Activated T-helper 2 cell treated with anti-CD3 and anti-CD28 coated beads, Interferon-gamma antibody, Interleukin-2, Interleukin-4, amounts not matched to agents 10 μg/mL and 5 μg/mL and 100 μg/mL, durations not matched to agents 14 hours and 24 hours and 36 hours (primary cell): ENCODE measurements at regions of chr2 and their contacts with region 1.

Region 1: DNA sequence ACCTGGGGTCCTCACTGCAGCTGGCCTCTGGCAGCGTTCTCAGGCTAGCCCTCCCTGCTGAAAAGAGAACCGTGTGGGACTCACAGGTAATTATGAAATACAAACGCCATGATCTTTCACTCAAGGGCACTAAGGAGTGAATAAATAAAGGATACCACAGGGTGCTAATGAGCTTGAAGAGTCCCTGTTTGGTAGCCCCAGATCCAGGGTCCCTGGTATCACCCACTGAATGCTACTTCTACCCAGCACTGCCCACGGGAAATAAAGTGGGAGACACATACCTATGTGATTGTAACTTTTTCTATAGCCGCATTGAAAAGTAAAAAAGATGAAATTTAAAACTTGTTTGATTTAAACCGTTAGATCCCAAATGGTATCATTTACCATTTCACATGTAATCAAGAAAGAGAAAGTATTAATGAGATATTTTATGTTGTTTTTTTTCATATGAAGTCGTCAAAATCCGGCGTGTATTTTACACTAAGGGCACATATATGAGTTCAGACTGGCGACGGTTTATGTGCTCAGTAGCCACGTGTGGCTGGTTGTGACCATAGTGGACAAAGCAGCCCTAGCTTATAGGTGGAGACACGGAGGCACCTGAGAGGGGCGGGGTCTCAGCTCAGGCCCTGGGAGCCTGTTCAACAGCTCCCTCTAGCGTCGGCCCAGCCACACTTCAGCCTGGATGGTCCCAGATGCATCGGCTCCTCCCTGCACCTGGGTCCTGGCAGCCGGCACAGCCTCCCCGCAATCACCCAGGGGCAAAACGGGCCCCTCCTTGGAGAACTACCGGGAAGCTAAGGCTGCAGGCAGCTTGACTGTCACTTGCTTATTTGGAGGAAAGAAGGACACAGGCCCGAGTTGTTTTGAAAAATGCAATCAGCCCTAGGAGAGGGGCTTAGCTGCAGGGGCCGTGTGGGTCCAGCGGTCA is 39.2 kb downstream of the ODC1 start:
- DNase-seq: peak; percentile 79
- H3K4me3 Mint-ChIP-seq: peak overlapping the region; percentile 76
- H3K27ac Mint-ChIP-seq: peak overlapping the region; percentile 95
- H3K4me1 Mint-ChIP-seq: peaks cover 49% of the 10 kb centered on the region
- H3K27me3 Mint-ChIP-seq: no peaks in the 10 kb centered on the region

Region 2: DNA sequence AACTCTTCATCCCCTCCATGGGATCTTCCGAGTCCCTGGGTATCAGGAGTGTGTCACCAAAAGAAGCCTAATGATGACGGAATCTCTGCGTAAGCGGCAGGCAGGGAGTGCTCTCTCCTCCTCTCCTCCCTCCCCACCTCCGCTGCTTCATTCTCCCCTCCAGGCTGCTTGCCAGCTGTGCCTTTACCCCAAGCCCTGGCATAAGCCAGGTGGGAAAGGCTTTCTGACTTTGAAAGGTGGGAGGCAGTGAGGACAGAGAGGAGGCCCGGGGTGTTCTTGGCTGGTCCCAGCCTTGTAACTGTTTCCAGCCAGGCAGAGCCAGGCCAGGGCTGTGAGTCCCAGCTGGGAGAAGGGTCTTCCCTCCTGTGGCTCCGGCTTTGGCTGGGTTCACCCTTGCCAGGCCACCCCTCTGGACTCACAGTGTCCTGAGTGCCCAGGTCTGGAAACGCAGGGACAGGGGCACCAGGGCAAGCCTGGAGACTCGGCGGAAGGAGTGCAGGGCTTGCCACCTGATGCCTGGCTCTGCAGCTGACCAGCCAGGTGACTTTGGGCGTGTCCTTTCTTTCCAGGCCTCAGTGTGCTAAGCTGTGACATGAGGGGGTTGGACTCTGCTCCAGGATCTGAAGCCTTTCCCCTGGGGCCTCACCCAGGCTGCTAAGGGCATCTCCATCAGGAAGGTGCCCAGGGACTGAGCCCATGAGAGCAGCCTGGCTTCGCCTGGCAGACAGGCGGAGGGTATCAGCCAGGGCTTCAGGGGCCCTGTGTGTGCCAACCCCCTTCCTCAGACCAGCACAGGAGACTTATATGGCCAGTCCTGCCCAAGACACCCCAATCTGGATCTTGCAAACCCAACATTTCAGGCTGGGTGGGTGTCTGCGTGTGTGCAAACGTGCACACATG is 139.0 kb before region 1 on chr2:
- intact Hi-C with region 1: loop called (anchors 1 kb)
- DNase-seq: no peak
- H3K4me3 Mint-ChIP-seq: no peak overlapping the region
- H3K27ac Mint-ChIP-seq: no peak overlapping the region
- H3K4me1 Mint-ChIP-seq: peaks cover 4% of the 10 kb centered on the region
- H3K27me3 Mint-ChIP-seq: peaks cover 2% of the 10 kb centered on the region

Region 3: GRCh38 chr2:10302479-10303180 is 106.3 kb before region 1 on chr2 and contains the start of gene HPCAL1:
- intact Hi-C with region 1: loop called (anchors 1 kb)
- DNase-seq: peak; percentile 80
- H3K4me3 Mint-ChIP-seq: peak within 1 kb of the TSS; percentile 98
- H3K27ac Mint-ChIP-seq: peak within 1 kb of the TSS; percentile 89
- H3K4me1 Mint-ChIP-seq: peaks cover 69% of the 10 kb centered on the region
- H3K27me3 Mint-ChIP-seq: no peaks in the 10 kb centered on the region
- total RNA-seq, gene HPCAL1: 102 and 110 TPM in 2 replicates

Region 4: GRCh38 chr2:10331027-10331701 is 77.8 kb before region 1 on chr2:
- intact Hi-C with region 1: loop called (anchors 1 kb)
- DNase-seq: peak; percentile 64
- H3K4me3 Mint-ChIP-seq: peak overlapping the region; percentile 95
- H3K27ac Mint-ChIP-seq: peak overlapping the region; percentile 92
- H3K4me1 Mint-ChIP-seq: peaks cover 64% of the 10 kb centered on the region
- H3K27me3 Mint-ChIP-seq: no peaks in the 10 kb centered on the region

Region 5: DNA sequence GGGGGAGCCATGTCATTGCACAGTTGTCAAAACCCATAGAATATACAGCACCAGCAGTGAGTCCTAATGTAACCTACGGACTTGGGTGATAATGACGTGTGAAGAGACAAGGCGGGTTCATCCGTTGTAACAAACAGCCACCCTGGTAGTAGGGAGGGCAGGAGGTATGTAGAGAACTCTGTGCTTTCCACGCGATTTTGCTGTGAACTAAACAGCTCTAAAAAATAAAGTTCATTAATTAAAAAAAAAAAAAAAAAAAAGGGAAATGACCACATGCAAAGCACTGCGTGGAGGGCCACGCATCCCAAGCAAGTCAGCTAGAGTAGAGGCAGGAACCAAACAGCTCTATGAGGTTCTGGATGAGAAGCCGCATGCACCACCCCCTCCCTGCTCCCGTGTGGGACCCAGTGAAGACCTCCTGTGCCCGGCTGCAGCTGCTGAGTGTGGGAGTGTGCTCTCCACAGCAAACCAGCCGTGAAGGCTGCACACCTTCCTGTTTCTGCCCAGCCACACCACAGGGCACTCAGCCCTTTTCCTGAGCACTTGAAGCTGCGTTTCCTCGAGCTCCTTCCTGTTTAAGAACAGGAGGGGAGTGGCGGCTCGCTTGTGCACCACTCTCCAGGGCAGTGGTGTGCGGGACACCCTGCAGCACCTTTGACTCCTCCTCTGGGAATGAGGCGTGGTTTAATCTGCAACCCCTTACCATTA is 26.4 kb before region 1 on chr2:
- intact Hi-C with region 1: loop called (anchors 2 kb)
- DNase-seq: peak; percentile 18
- H3K4me3 Mint-ChIP-seq: peak overlapping the region; percentile 26
- H3K27ac Mint-ChIP-seq: no peak overlapping the region
- H3K4me1 Mint-ChIP-seq: peaks cover 66% of the 10 kb centered on the region
- H3K27me3 Mint-ChIP-seq: no peaks in the 10 kb centered on the region

Region 6: DNA sequence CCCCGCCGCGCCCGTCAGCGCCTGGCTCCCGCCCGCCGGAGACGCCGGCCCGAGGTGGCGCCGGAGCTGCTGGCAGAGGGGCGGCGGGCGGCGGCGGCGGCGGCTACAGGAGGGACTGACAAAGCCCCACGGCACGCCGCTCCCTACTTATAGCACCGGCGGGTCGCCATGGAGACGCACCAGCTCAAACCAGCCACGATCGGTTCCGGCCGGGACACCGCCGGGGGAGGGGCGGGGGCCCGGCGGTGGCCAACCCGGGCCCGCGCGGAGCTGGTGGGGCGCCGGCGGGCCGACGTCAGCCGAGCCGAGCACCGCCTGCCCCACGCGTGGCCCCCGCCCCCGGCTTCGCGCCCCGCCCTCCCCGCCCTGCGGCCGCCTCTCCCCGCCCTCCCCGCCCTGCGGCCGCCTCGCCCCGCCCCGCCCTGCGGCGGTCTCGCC is 39.3 kb after region 1 on chr2 and contains the start of gene ODC1:
- intact Hi-C with region 1: loop called (anchors 1 kb)
- DNase-seq: peak; percentile 91
- H3K4me3 Mint-ChIP-seq: peak within 1 kb of the TSS; percentile 94
- H3K27ac Mint-ChIP-seq: peak within 1 kb of the TSS; percentile 92
- H3K4me1 Mint-ChIP-seq: peaks cover 36% of the 10 kb centered on the region
- H3K27me3 Mint-ChIP-seq: no peaks in the 10 kb centered on the region
- total RNA-seq, gene ODC1: 161 and 164 TPM in 2 replicates

Region 7: GRCh38 chr2:10678222-10678621 is 269.3 kb after region 1 on chr2:
- intact Hi-C with region 1: no loop called
- DNase-seq: no peak
- H3K4me3 Mint-ChIP-seq: no peak overlapping the region
- H3K27ac Mint-ChIP-seq: no peak overlapping the region
- H3K4me1 Mint-ChIP-seq: peaks cover 28% of the 10 kb centered on the region
- H3K27me3 Mint-ChIP-seq: no peaks in the 10 kb centered on the region